ENCODE measurements at regions of chr3 and their contacts with region 1.

Region 1: GRCh38 chr3:128226795-128227395 is 73.6 kb downstream of the EEFSEC start:
- DNase-seq: peak; percentile 29 to 88
- H3K4me3 ChIP-seq: no peak overlapping the region
- H3K27ac ChIP-seq: no peak overlapping the region
- H3K4me1 ChIP-seq: peaks cover 2 to 3% (median 2%) of the 10 kb centered on the region in 4 experiments; a peak in 5 of 7 replicates
- H3K27me3 ChIP-seq: no peaks in the 10 kb centered on the region; a peak in 1 of 7 replicates
- CTCF ChIP-seq: peak; percentile 89 to 97 (median 90)
- EP300 ChIP-seq: no peak
- POLR2A ChIP-seq: no peak
- RAD21 ChIP-seq: peak; percentile 81 to 91

Region 2: DNA sequence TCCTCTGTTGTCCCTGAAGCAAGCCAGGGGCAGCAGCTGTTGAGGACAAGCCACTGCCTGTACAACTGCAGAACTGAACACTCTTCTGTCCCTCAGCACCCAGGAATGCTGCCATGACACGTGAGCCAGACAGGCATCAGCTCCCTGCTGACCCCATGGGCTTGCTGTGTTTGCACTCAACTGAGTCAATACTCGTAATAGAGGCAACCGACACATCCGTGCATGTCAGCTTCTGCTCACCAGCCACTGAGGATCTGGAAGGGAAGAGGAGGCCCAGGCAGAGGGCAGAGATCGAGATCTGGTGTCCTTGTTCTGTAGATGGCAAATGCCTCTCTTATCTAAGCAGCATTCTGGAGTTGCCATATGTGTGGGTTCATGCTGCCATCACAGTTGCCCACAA is 228.9 kb before region 1 on chr3:
- CTCF ChIA-PET with region 1: no interaction called
- POLR2A ChIA-PET with region 1: no interaction called
- DNase-seq: no peak
- H3K4me3 ChIP-seq: no peak overlapping the region
- H3K27ac ChIP-seq: no peak overlapping the region
- H3K4me1 ChIP-seq: peaks cover 0 to 5% (median 0%) of the 10 kb centered on the region in 4 experiments; a peak in 2 of 7 replicates
- H3K27me3 ChIP-seq: peaks cover 0 to 2% (median under 1%) of the 10 kb centered on the region in 4 experiments; a peak in 1 of 7 replicates
- CTCF ChIP-seq: no peak
- EP300 ChIP-seq: no peak
- POLR2A ChIP-seq: no peak
- RAD21 ChIP-seq: no peak

Region 3: DNA sequence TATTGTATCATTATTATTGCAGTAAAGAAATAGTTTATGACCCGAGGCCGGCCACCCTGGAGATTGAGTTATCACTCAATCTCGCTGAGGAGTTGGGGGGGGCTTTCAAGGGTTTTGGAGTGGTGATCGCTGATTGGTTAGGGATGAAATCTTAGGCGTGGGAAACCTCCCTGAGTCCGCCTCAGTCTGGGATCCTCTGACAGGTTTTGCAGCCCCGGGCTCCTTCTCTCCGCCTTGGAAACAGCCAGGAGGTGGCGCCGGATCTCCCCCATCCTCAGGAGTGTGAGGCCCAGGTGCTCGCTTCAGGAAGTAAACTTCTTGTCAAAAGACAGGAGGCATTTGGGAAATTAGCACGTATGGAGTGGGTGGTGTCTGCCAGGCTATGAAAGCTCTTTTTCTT is 215.8 kb before region 1 on chr3:
- CTCF ChIA-PET with region 1: no interaction called
- POLR2A ChIA-PET with region 1: no interaction called
- DNase-seq: peak; percentile 61 to 84
- H3K4me3 ChIP-seq: peak overlapping the region in 1 of 4 experiments; percentile 29; a peak in 1 of 8 replicates
- H3K27ac ChIP-seq: no peak overlapping the region
- H3K4me1 ChIP-seq: peaks cover 3 to 10% (median 8%) of the 10 kb centered on the region in 4 experiments
- H3K27me3 ChIP-seq: no peaks in the 10 kb centered on the region
- CTCF ChIP-seq: peak; percentile 61 to 81 (median 80)
- EP300 ChIP-seq: no peak
- POLR2A ChIP-seq: no peak
- RAD21 ChIP-seq: peak; percentile 65 to 75

Region 4: DNA sequence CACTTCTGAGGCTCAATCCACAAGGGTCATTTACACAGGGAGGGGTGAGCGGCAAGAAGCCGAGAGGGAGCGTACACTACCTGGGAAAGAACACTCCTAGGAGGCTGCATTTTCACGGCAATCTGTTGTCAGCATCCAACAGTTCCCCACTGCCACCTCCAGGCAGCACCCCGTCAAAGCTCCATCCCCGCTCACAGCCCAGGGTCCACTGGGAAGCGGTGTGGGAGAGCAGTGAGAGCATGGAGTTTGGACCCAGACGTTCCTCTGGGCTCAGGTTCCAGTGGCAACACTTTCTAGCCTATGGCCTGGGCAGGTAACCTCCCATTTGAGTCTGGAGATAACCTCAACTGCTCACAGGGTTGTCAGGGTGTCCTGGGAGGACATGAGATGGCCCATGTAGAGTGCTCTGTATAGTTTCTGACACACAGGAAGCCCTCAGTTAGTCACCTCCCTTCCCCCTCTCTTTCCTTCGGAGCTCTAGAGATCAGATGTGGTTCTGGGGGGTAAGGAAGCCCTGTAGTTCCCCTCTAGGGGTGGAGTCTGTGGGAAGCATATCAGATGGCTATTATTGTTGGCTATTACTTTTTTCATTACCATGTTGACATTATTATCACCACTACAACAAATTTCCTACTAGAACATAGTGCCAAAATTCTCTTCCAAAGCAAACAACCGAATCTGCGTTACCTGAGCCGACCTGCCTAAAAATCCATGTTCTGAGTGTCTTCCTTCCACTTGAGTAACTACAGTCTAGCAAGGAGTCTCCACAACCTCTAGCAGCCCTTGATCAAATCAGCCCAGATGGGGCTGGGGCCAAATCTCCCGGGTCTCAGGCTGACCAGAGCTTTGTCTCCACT is 132.4 kb before region 1 on chr3:
- CTCF ChIA-PET with region 1: no interaction called
- POLR2A ChIA-PET with region 1: no interaction called
- DNase-seq: no peak
- H3K4me3 ChIP-seq: no peak overlapping the region
- H3K27ac ChIP-seq: 0 out of 2 replicates have a peak overlapping the region, but pooled peaks have one; percentile 15
- H3K4me1 ChIP-seq: peaks cover 9 to 30% (median 19%) of the 10 kb centered on the region in 4 experiments
- H3K27me3 ChIP-seq: no peaks in the 10 kb centered on the region
- CTCF ChIP-seq: peak; percentile 2 to 16 (median 13); a peak in 3 of 4 replicates
- EP300 ChIP-seq: no peak
- POLR2A ChIP-seq: no peak
- RAD21 ChIP-seq: 0 out of 4 replicates have a peak, but pooled peaks have one; percentile 4 to 11

Region 5: DNA sequence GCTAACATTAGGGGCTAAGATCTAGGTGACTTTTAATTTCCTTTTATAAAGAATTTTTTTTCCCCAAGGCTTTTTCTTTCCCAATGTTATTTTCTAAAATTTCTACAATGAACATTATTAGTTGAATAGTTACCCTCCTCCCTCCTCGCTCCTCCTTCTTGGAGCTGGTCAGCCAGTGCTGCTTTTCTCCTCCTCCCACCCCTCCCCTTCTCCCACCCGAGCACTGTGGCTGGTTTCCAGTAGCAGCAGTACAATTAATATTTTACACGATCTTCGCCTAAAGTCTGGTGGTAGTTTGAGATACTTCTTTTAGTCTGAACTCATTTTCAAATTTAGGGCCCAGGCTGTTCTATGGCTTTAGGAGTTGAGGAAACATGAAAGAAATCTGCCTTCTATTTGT is 32.1 kb before region 1 on chr3:
- CTCF ChIA-PET with region 1: interaction called, 11 read pairs
- POLR2A ChIA-PET with region 1: no interaction called
- DNase-seq: no peak
- H3K4me3 ChIP-seq: no peak overlapping the region
- H3K27ac ChIP-seq: no peak overlapping the region
- H3K4me1 ChIP-seq: peaks cover 2 to 12% (median 5%) of the 10 kb centered on the region in 4 experiments
- H3K27me3 ChIP-seq: no peaks in the 10 kb centered on the region; a peak in 1 of 7 replicates
- CTCF ChIP-seq: no peak
- EP300 ChIP-seq: no peak
- POLR2A ChIP-seq: no peak
- RAD21 ChIP-seq: no peak

Region 6: DNA sequence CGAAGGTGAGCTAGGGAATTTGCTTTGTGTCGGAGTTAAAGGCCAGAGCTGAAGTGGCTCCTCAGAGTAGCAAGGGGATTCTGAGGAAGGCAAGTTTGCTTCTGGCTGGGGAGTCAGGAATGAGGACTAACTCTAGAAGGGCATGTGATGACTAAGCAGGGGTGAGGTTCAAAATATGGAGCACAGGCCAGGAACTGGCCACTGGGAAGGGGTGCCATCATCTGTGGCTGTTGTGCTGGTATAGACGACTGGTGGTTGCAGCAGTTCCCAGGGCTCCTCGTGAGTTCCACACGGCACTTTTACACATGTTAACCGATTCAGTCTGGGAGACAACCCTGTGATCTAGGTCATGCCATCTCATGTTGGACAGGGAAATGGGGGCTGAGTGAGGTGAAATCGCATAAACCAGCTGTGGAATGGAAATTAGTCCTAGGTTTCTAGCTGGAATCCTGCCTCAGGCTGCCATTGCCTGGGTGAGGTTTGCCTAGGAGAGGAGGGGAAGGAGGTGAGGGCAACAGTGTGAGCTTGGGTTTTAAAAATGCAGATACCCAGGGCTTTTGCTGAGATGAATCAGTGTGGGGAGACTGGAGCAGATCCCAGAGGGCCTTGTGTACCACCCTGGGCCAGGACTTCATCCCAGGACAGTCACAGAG is 27.3 kb after region 1 on chr3:
- CTCF ChIA-PET with region 1: interaction called, 30 read pairs
- POLR2A ChIA-PET with region 1: no interaction called
- DNase-seq: no peak
- H3K4me3 ChIP-seq: no peak overlapping the region
- H3K27ac ChIP-seq: no peak overlapping the region
- H3K4me1 ChIP-seq: 0 out of 7 replicates have a peak, but pooled peaks cover 0 to 5% (median 0%) of the 10 kb centered on the region in 4 experiments
- H3K27me3 ChIP-seq: no peaks in the 10 kb centered on the region
- CTCF ChIP-seq: no peak
- EP300 ChIP-seq: no peak
- POLR2A ChIP-seq: no peak
- RAD21 ChIP-seq: no peak

Region 7: GRCh38 chr3:128278761-128279600 is 52.1 kb after region 1 on chr3:
- CTCF ChIA-PET with region 1: interaction called, 29 read pairs
- POLR2A ChIA-PET with region 1: interaction called, 3 read pairs
- DNase-seq: peak in 1 of 2 experiments; percentile 59
- H3K4me3 ChIP-seq: no peak overlapping the region
- H3K27ac ChIP-seq: no peak overlapping the region
- H3K4me1 ChIP-seq: peaks cover 31 to 75% (median 47%) of the 10 kb centered on the region in 4 experiments
- H3K27me3 ChIP-seq: peaks cover 0 to 12% (median 7%) of the 10 kb centered on the region in 4 experiments; a peak in 3 of 7 replicates
- CTCF ChIP-seq: peak in 2 of 3 experiments; percentile 4 to 12; a peak in 1 of 4 replicates
- EP300 ChIP-seq: no peak
- POLR2A ChIP-seq: no peak
- RAD21 ChIP-seq: peak in 1 of 2 experiments; percentile 17; a peak in 1 of 4 replicates

Region 8: DNA sequence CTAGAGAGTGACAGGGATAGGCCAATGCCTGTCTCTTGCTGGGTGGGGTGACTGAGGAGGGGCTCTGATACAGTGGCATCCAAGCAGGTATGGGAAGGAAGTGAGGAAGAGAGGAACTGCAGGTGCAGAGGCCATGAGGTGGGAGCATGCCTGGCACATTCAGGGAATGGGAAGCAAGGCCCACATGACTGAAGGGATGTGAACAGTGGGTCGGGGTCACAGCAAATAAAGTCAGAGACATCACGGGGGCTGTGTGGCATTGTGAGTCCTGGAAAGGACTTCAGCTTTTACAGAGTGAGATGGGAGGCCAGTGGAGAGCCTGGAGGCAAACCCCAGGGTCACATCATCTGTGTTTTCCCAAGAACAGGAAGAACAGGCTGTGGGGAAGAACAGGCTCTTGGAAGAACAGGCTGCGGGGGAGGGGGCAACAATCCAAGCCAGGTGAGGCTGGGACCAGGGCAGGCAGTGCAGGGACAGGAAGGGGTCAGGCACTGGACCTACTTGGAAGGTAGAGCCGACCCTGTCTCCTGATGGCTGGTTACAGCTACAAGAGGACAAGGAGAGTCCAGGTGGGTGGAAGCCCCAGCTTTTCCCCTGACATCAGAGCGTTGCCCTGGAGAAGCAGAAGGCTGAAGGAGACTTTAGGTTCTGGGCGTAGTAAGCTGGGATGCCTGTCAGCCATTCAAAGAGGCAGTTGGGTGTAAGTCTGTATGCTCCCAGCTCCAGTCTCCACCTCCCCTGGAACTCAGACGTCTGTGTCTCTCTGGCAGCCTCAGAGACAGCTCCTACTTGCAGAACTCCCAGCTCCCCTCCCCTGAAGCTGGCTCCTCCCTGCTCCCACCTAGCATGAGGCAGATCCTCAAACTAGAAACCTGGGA is 108.7 kb after region 1 on chr3:
- CTCF ChIA-PET with region 1: interaction called, 13 read pairs
- POLR2A ChIA-PET with region 1: no interaction called
- DNase-seq: no peak
- H3K4me3 ChIP-seq: no peak overlapping the region
- H3K27ac ChIP-seq: no peak overlapping the region
- H3K4me1 ChIP-seq: peaks cover 0 to 6% (median 3%) of the 10 kb centered on the region in 4 experiments; a peak in 4 of 7 replicates
- H3K27me3 ChIP-seq: no peaks in the 10 kb centered on the region
- CTCF ChIP-seq: no peak
- EP300 ChIP-seq: no peak
- POLR2A ChIP-seq: no peak
- RAD21 ChIP-seq: no peak

Measured in H1 (cell line).